PC-3 (cell line): ENCODE measurements at regions of chr13 and their contacts with region 1.

Region 1: DNA sequence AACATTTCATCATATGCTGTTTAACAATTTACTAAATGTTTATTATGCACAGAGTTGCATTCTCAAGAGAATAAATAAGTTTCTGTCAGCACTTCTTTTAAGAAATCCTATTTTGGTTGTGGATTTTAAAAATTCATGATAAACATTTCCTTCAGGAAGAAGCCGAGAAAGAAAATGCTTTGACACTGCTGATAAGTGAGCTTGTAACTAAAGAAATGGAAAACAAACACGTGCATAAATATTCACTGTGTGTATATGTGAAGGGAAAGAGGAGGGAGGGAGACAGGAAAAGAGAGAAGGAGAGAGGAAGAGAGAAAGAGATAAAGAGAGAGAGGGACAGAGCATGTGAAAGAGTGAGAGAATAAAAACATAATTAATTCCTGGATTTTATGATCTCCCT is 1165.0 kb downstream of the DIAPH3 start:
- DNase-seq: no peak
- ATAC-seq: no peak
- H3K4me3 ChIP-seq: no peak overlapping the region
- H3K27ac ChIP-seq: no peak overlapping the region
- H3K4me1 ChIP-seq: no peaks in the 10 kb centered on the region
- H3K27me3 ChIP-seq: no peaks in the 10 kb centered on the region
- CTCF ChIP-seq: no peak

Region 2: DNA sequence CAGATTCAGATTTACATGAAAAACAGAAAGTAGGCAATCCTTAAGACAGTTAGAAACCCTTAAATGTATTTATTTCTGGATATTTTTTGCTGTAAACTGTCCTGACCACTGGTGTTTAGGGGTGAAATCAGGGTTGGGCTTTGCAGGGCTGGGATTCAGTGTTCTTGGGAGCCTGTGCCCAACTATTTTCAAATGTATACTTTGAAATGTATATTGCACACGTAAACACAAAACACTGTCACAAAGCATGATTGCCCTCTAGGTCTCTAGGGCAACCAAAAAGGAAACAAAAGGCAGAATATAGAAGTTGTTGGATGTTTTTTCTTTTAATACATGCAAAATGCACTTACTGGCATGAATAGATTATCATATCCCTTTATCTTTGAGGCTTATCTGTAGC is 20.4 kb before region 1 on chr13:
- CTCF ChIA-PET with region 1: no interaction called
- POLR2A ChIA-PET with region 1: interaction called, 18 read pairs
- intact Hi-C with region 1: no loop called
- DNase-seq: no peak
- ATAC-seq: no peak
- H3K4me3 ChIP-seq: no peak overlapping the region
- H3K27ac ChIP-seq: no peak overlapping the region
- H3K4me1 ChIP-seq: no peaks in the 10 kb centered on the region
- H3K27me3 ChIP-seq: no peaks in the 10 kb centered on the region
- CTCF ChIP-seq: no peak